Heart right ventricle (tissue), 16 donors: ENCODE measurements at regions of chr20 and their contacts with region 1.

Region 1: DNA sequence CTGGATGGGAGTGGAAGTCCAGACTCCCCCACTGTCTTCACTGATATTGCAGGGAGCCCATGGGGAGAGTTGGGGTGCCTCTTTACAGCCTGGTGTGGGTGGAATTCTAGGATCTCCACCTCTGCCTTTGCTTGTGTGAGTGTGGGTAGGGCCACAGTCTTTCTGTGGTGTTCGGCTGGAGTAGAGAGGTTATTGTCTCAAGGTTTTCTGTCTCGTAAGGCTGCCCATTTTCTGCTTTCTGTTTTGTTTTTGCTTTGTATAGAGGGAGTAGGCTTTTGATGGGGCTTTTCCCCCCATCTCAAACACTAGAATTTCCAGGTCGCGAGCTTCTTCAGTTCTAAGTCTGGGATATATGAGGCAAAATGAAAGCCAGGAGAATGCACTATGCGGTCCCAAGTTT is 40.4 kb upstream of the ELMO2 start:
- DNase-seq: no peak
- ATAC-seq: no peak
- H3K4me3 ChIP-seq: no peak overlapping the region
- H3K27ac ChIP-seq: no peak overlapping the region
- H3K4me1 ChIP-seq: no peaks in the 10 kb centered on the region
- H3K27me3 ChIP-seq: peaks cover 0 to 34% (median 5%) of the 10 kb centered on the region in 7 donors
- CTCF ChIP-seq: no peak

Region 2: GRCh38 chr20:45552456-45552855 is 894.4 kb before region 1 on chr20:
- intact Hi-C with region 1: loop called in 1 of 10 experiments (anchors 10 kb)
- DNase-seq: no peak
- ATAC-seq: no peak
- H3K4me3 ChIP-seq: no peak overlapping the region
- H3K27ac ChIP-seq: no peak overlapping the region
- H3K4me1 ChIP-seq: no peaks in the 10 kb centered on the region
- H3K27me3 ChIP-seq: peaks cover 0 to 25% (median 5%) of the 10 kb centered on the region in 7 donors
- CTCF ChIP-seq: no peak